AG04450 (cell line): ENCODE measurements at regions of chr4 and their contacts with region 1.

Region 1: GRCh38 chr4:71184195-71184781 is 154.5 kb upstream of the SLC4A4 start:
- DNase-seq: no peak
- H3K4me3 ChIP-seq: no peak overlapping the region
- H3K27ac ChIP-seq: no peak overlapping the region
- H3K27me3 ChIP-seq: no peaks in the 10 kb centered on the region
- CTCF ChIP-seq: peak; percentile 68

Region 2: GRCh38 chr4:70158576-70158975 is 1025.7 kb before region 1 on chr4:
- CTCF ChIA-PET with region 1: no interaction called
- POLR2A ChIA-PET with region 1: no interaction called
- DNase-seq: no peak
- H3K4me3 ChIP-seq: no peak overlapping the region
- H3K27ac ChIP-seq: no peak overlapping the region
- H3K27me3 ChIP-seq: no peaks in the 10 kb centered on the region
- CTCF ChIP-seq: no peak

Region 3: DNA sequence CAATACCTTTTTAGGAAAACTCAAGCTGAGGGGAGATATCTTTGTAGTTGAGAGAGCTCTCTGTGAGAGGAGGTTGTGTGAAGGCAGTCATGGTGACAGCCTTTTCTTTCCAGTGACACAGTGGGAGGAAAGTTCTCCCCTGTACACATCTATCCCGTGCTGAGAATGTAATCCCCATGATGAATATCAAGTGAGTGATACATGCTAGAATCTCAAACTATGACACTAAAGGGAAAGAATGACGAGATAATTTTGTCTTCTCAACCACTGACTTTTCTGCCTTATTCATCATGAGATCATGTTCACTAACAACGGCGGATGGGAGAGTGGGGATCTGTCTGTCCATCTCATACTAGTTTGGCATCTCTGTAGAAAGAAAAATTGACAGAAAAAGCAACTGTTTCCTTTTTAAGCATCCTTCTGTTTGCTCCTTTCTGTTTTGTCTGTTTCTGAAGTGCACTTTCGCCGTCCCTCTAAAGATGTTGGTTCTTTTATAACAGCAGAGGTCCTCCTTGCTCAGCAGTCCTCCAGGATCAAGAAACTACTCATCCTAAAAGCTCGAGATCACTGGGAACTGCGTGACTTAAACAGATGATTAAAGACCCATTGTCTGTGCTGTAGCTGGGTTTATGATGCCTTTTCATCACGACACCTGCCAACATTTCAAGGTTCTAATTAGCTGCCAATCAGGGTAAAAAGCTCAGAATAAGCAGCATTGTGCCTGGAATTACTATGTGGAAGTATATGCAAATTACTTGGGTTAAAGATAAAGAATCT is 53.3 kb before region 1 on chr4:
- CTCF ChIA-PET with region 1: interaction called, 20 read pairs
- POLR2A ChIA-PET with region 1: interaction called, 4 read pairs
- DNase-seq: no peak
- H3K4me3 ChIP-seq: peak overlapping the region; percentile 23
- H3K27ac ChIP-seq: peak overlapping the region; percentile 43
- H3K27me3 ChIP-seq: no peaks in the 10 kb centered on the region
- CTCF ChIP-seq: peak; percentile 41; the same call in 1 of the 2 replicates

Region 4: GRCh38 chr4:71147261-71147660 is 37.0 kb before region 1 on chr4:
- CTCF ChIA-PET with region 1: no interaction called
- POLR2A ChIA-PET with region 1: no interaction called
- DNase-seq: no peak
- H3K4me3 ChIP-seq: no peak overlapping the region
- H3K27ac ChIP-seq: no peak overlapping the region
- H3K27me3 ChIP-seq: no peaks in the 10 kb centered on the region
- CTCF ChIP-seq: no peak

Region 5: DNA sequence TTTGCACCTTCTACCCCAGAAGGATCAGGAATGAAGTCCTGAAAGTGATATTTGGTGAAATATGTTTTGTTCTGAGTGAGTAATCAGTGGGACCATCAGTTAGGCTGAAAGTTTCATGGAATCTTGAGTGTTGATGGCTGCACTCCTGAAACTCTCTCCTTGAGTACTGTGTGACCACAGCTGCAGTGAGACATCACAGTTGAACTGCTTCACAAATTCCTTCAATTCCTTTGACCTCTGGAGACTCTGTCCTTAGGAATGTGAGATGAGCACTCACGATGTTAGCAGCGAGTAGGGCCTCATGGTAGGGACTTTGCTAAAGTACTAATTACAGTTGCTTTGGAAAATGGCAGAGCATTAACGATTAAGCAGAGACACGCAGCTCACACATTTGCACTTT is 11.6 kb after region 1 on chr4:
- CTCF ChIA-PET with region 1: interaction called, 13 read pairs
- POLR2A ChIA-PET with region 1: interaction called, 3 read pairs
- DNase-seq: peak; percentile 52
- H3K4me3 ChIP-seq: no peak overlapping the region
- H3K27ac ChIP-seq: no peak overlapping the region
- H3K27me3 ChIP-seq: no peaks in the 10 kb centered on the region
- CTCF ChIP-seq: no peak

Region 6: GRCh38 chr4:71229477-71230270 is 45.4 kb after region 1 on chr4:
- CTCF ChIA-PET with region 1: interaction called, 28 read pairs
- POLR2A ChIA-PET with region 1: no interaction called
- DNase-seq: no peak
- H3K4me3 ChIP-seq: no peak overlapping the region
- H3K27ac ChIP-seq: no peak overlapping the region
- H3K27me3 ChIP-seq: no peaks in the 10 kb centered on the region
- CTCF ChIP-seq: peak; percentile 86

Region 7: GRCh38 chr4:71270901-71271300 is 86.6 kb after region 1 on chr4:
- CTCF ChIA-PET with region 1: interaction called, 4 read pairs
- POLR2A ChIA-PET with region 1: interaction called, 13 read pairs
- DNase-seq: no peak
- H3K4me3 ChIP-seq: no peak overlapping the region
- H3K27ac ChIP-seq: no peak overlapping the region
- H3K27me3 ChIP-seq: no peaks in the 10 kb centered on the region
- CTCF ChIP-seq: peak; percentile 50

Region 8: DNA sequence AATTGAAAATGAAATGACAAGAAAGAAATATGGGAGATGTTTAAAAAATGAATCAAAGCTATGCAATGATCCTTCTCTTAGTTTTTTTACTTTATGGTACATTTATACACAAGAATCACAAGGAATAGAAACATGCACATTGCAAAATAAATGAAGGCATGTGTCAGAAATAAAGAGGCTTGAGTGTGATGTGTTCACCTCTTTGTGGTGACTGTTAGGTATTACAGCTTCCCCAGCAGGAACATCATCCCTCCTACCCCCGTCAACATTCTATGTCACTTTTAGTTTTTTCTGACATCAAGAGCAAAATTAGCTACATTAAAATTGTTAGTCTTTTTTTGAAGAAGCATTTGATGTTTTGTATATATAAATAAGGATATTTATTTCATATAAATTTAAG is 369.3 kb after region 1 on chr4:
- CTCF ChIA-PET with region 1: interaction called, 16 read pairs
- POLR2A ChIA-PET with region 1: interaction called, 4 read pairs
- DNase-seq: no peak
- H3K4me3 ChIP-seq: no peak overlapping the region
- H3K27ac ChIP-seq: no peak overlapping the region
- H3K27me3 ChIP-seq: no peaks in the 10 kb centered on the region
- CTCF ChIP-seq: peak; percentile 68

Region 9: DNA sequence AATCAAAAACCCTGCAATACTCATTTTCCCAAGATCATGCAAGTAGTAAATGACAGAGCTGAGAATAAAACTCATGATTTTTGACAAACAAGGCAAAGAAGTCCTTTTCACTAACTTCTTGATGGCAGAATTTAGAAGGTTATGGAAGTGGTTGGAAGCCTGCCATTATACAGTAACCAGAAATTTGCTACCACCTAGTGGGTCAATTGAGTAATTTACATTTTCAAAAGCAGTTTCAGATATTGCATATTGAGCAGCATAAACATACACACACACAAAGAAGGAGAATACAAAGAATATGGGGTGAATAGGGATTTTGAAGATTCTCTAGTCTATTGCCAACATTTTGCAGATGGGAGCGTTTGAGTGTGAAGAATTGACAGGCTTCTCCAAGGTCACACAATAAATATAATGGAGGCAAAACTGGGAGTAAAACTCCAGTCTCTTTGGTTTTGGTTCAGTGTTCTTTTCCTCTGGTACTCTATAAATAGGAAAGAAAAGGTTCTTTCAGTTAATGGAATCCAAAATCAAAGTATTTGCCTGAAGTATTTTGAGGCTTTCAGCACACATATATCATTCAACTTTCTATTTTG is 529.4 kb after region 1 on chr4:
- CTCF ChIA-PET with region 1: interaction called, 54 read pairs
- POLR2A ChIA-PET with region 1: no interaction called
- DNase-seq: peak; percentile 59
- H3K4me3 ChIP-seq: no peak overlapping the region
- H3K27ac ChIP-seq: no peak overlapping the region
- H3K27me3 ChIP-seq: peaks cover 2% of the 10 kb centered on the region
- CTCF ChIP-seq: peak; percentile 64